ENCODE measurements at regions of chr19 and their contacts with region 1.

Region 1: GRCh38 chr19:55117636-55118391 is at the start of gene PPP1R12C:
- DNase-seq: peak; percentile 98 to 100
- H3K4me3 ChIP-seq: peak within 1 kb of the TSS; percentile 76 to 81
- H3K27ac ChIP-seq: peak within 1 kb of the TSS; percentile 79 to 87
- H3K4me1 ChIP-seq: peaks cover 13 to 37% of the 10 kb centered on the region in 2 donors
- H3K27me3 ChIP-seq: no peaks in the 10 kb centered on the region
- CTCF ChIP-seq: no peak
- total RNA-seq, gene PPP1R12C: 219 TPM

Region 2: DNA sequence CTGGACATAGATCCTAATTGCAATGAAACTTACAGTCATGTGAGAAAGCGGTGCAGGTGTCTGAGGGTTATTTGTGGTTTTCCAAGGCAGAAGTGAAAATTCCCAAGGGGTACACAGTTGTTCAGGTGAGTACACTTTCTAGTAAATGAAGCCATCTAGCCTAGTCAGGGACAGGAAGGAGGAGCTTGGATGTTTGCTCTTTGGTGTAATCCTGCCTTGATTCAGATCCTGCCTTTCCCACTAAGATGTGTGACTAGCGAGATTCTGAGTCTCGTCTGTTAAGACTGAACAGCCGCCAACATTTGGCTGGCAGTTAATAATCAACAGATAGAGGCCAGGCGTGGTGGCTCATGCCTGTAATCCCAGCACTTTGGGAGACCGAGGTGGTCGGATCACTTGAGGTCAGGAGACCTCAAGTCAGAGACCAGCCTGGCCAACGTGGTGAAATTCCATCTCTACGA is 914.6 kb before region 1 on chr19:
- intact Hi-C with region 1: loop called (anchors 5 kb)
- DNase-seq: no peak
- H3K4me3 ChIP-seq: no peak overlapping the region
- H3K27ac ChIP-seq: no peak overlapping the region
- H3K4me1 ChIP-seq: peaks cover 6 to 23% of the 10 kb centered on the region in 2 donors
- H3K27me3 ChIP-seq: no peaks in the 10 kb centered on the region
- CTCF ChIP-seq: no peak

Region 3: DNA sequence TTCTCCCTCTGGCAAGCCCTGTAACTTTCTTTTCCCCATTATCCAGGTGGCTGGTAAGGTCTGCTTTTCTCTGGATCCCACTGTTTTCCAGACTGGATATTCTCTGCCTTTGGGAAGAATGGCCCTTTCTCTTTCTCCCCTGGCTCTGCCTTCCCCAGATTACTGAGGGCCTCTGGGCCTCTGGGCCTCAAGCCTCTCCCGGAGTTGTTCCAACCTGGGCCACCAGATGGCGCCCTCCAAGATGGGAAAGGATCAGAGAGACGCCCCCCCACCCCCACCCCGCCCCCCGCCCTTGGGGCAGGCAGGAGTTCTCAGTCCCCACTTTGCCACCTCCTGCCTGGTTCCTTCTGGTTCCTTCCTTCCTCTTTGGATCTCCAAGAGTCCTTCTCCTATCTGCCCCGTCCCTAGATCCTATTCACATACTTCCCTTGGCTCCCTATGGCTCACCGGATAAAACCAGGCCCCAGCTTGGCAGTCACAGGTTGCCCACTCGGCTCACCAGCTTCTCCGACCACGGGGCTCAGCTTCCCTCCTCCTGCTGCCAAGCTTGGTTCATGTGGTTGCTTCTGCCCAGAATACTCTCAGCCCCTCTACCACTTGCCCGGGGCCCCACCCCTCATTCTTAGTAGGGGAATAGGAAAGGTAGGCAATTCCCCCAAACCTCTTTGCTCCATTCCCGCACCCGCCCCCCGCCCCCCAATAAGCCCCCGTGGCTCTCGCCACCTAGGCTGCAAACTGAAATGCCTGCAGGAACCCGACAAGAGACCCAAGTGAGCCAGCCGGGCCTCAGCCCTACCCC is 29.1 kb before region 1 on chr19:
- intact Hi-C with region 1: loop called (anchors 2 kb)
- DNase-seq: peak in 1 of 2 donors; percentile 83
- H3K4me3 ChIP-seq: no peak overlapping the region
- H3K27ac ChIP-seq: no peak overlapping the region
- H3K4me1 ChIP-seq: peaks cover 0 to 20% of the 10 kb centered on the region in 2 donors
- H3K27me3 ChIP-seq: peaks cover 13% of the 10 kb centered on the region
- CTCF ChIP-seq: peak; percentile 36 to 91 (median 87)

Region 4: DNA sequence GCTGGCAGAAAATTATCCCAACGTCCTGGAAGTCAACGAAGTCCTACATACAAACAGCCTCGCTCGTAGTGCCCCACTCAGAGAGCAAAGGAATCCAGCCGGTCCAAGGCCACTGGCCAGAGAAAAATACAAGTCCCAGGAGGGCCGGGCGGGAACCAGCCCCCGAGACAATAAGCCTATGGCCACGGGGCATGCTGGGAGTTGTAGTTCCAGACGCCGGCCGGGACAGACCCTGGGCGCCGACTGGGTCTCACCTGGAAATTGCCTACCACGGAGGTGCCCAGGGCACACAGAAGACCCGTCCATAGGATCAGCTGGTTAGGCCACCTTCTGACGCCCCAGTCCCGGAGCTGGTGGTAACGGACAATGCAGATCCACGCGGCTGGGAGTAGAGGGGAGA is 202.0 kb after region 1 on chr19:
- intact Hi-C with region 1: no loop called
- DNase-seq: no peak
- H3K4me3 ChIP-seq: no peak overlapping the region
- H3K27ac ChIP-seq: no peak overlapping the region
- H3K4me1 ChIP-seq: no peaks in the 10 kb centered on the region
- H3K27me3 ChIP-seq: no peaks in the 10 kb centered on the region
- CTCF ChIP-seq: no peak

Region 5: GRCh38 chr19:55339048-55339888 is 221.5 kb after region 1 on chr19 and contains the start of gene KMT5C:
- intact Hi-C with region 1: loop called (anchors 1 kb)
- DNase-seq: peak; percentile 100
- H3K4me3 ChIP-seq: peak within 1 kb of the TSS; percentile 82 to 84
- H3K27ac ChIP-seq: peak within 1 kb of the TSS; percentile 72 to 89
- H3K4me1 ChIP-seq: peaks cover 5 to 17% of the 10 kb centered on the region in 2 donors
- H3K27me3 ChIP-seq: no peaks in the 10 kb centered on the region
- CTCF ChIP-seq: peak; percentile 33 to 50 (median 47)
- total RNA-seq, gene KMT5C: 21.7 TPM

Region 6: GRCh38 chr19:55599468-55600279 is 481.9 kb after region 1 on chr19 and contains the start of gene FIZ1:
- intact Hi-C with region 1: loop called (anchors 2 kb)
- DNase-seq: peak; percentile 97 to 99
- H3K4me3 ChIP-seq: peak within 1 kb of the TSS; percentile 82 to 89
- H3K27ac ChIP-seq: peak within 1 kb of the TSS; percentile 99 to 100
- H3K4me1 ChIP-seq: peaks cover 3 to 4% of the 10 kb centered on the region in 2 donors
- H3K27me3 ChIP-seq: no peaks in the 10 kb centered on the region
- CTCF ChIP-seq: no peak
- total RNA-seq, gene FIZ1: 30.5 TPM